ENCODE measurements at regions of chr14 and their contacts with region 1.

Region 1: GRCh38 chr14:75088574-75089373 is 19.3 kb downstream of the ZC2HC1C start:
- DNase-seq: no peak
- ATAC-seq: peak; percentile 72

Region 2: GRCh38 chr14:74860906-74861733 is 227.7 kb before region 1 on chr14:
- intact Hi-C with region 1: loop called (anchors 5 kb)
- DNase-seq: peak; percentile 95
- ATAC-seq: peak; percentile 89

Region 3: DNA sequence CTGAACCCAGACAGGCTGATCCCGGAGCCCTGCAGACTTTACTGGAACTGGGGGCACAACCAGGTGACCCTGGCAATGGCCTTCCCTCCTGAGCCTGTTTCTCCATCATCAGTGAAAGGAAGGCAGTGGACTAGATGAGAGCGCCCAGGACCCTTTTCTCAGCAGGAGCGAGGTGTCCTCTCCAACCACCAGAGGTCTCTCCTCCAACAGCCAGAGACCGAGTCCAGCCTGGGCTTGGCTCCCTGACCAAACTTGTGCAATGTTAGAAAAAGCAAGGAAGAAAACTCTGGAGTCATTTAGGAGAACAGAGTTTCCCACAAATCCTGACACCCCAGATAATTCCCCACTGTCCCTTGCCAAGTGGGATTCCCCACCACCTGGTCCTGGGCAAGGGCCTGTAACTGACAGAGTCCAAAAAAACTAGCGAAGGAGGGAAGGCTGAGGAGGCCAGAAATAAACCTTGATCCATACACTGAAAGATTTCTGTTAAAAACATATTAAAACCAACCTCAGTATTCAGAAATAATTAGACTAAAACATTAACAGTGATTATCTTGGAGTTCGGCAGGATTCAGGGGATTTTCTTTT is 174.7 kb before region 1 on chr14:
- intact Hi-C with region 1: loop called (anchors 2 kb)
- DNase-seq: peak; percentile 82
- ATAC-seq: peak; percentile 37

Region 4: GRCh38 chr14:74945823-74946682 is 142.7 kb before region 1 on chr14:
- intact Hi-C with region 1: loop called (anchors 10 kb)
- DNase-seq: peak; percentile 80
- ATAC-seq: peak; percentile 86

Region 5: GRCh38 chr14:75860561-75861160 is 771.9 kb after region 1 on chr14:
- intact Hi-C with region 1: no loop called
- DNase-seq: no peak
- ATAC-seq: no peak

Measured in Right ventricle myocardium superior (tissue), 1 donor.